MCF 10A (cell line): ENCODE measurements at regions of chr12 and their contacts with region 1.

Region 1: DNA sequence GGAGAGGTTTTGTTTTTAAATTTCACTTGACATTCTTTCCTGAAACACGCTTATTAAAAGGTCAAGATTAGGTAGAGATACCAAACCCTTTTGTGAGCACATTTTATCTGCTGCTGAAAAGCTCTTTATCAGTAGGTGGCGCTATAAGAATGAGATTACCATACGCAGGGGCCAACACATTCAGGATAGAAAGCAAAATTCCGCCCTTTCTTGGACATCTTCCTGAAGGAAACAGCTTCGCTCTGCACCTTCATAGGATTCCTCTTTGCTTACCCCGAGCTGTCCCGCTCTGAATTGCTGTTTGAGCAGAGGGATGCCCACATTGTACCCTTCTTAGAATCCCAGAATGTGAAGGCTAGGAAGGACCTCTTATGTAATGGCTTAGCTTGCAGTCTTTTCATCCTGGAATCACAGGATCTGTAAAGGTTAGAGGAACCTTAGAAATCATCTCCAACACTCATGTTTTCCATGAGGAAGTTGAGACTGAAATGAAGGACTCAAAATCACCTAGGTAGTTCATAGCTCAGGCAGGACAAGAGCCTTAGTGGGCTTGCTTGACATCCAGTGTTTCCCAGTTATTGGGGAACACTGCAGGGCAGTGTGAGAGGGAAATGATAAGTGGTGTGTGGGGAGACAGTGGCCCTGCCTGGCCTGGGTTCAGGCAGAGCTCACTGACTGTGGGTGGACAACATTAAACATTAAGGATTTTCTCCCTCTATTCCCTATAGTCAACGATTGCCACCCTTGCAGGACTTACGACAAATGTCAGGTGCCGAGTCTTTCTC is 38.7 kb upstream of the CRY1 start:
- DNase-seq: peak; percentile 72
- H3K4me3 Mint-ChIP-seq: no peak overlapping the region
- H3K27ac Mint-ChIP-seq: no peak overlapping the region
- H3K4me1 Mint-ChIP-seq: no peaks in the 10 kb centered on the region
- H3K27me3 Mint-ChIP-seq: no peaks in the 10 kb centered on the region
- CTCF ChIP-seq: peak; percentile 68

Region 2: DNA sequence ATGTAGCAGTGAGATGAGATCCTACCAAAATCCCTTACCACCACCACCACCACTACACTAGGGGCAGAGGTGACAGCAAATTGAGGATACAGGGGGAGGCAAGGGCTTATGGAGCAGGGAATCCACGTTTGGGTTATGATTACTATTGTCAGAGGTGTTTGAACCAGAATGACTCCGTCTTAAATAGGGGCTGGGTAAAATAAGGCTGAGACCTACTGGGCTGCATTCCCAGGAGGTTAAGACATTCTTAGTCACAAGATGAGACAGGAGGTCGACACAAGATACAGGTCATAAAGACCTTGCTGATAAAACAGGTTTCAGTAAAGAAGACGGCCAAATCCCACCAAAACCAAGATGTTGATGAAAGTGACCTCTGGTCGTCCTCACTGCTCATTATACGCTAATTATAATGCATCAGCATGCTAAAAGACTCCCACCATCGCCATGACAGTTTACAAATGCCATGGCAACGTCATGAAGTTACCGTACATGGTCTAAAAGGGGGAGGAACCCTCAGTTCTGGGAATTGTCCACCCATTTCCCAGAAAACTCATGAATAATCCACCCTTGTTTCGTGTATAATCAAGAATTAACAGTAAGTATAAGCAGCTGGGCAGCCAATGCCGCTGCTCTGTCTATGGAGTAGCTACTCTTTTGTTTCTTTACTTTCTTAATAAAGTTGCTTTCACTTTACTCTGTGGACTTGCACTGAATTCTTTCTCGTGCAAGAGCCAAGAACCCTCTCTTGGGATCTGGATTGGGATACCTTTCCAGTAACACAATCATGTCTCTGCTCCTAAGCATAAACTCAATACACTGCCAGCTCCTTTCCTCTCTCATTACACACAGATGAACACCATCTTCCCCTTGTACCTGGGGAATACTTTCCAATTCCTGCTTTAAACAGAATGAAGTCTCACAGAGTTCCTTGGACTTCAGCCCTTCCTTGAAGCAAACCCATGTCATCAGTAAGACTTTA is 22.0 kb before region 1 on chr12:
- CTCF ChIA-PET with region 1: interaction called, 59 read pairs
- POLR2A ChIA-PET with region 1: interaction called, 3 read pairs
- intact Hi-C with region 1: no loop called
- DNase-seq: no peak
- H3K4me3 Mint-ChIP-seq: no peak overlapping the region
- H3K27ac Mint-ChIP-seq: no peak overlapping the region
- H3K4me1 Mint-ChIP-seq: no peaks in the 10 kb centered on the region
- H3K27me3 Mint-ChIP-seq: peaks cover 39% of the 10 kb centered on the region
- CTCF ChIP-seq: no peak

Region 3: GRCh38 chr12:107304588-107305532 is 172.8 kb after region 1 on chr12:
- CTCF ChIA-PET with region 1: interaction called, 10 read pairs
- POLR2A ChIA-PET with region 1: no interaction called
- intact Hi-C with region 1: no loop called
- DNase-seq: no peak
- H3K4me3 Mint-ChIP-seq: no peak overlapping the region
- H3K27ac Mint-ChIP-seq: no peak overlapping the region
- H3K4me1 Mint-ChIP-seq: no peaks in the 10 kb centered on the region
- H3K27me3 Mint-ChIP-seq: peaks cover 20% of the 10 kb centered on the region
- CTCF ChIP-seq: no peak

Region 4: GRCh38 chr12:107393043-107393717 is 261.2 kb after region 1 on chr12:
- CTCF ChIA-PET with region 1: interaction called, 150 read pairs
- POLR2A ChIA-PET with region 1: interaction called, 5 read pairs
- intact Hi-C with region 1: no loop called
- DNase-seq: no peak
- H3K4me3 Mint-ChIP-seq: no peak overlapping the region
- H3K27ac Mint-ChIP-seq: no peak overlapping the region
- H3K4me1 Mint-ChIP-seq: no peaks in the 10 kb centered on the region
- H3K27me3 Mint-ChIP-seq: no peaks in the 10 kb centered on the region
- CTCF ChIP-seq: no peak

Region 5: DNA sequence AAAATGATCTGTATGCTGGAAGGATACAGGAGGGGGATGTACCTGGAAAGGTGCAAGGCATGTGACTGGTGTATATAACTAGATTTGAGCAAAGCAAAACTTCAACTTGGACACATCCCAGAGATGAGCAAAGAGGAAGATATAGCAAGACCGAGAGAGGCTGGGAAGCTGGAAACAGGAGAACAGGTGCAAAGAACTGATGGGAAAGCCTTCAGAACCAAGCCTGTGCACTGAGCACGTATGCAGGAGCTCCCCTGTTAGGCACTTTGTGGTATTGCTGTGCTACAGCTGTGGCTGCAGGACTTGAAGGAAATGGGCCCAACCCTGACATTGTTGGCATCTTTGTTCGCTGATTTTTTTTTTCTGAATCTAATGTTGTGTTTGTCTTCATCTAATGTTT is 432.9 kb after region 1 on chr12:
- CTCF ChIA-PET with region 1: interaction called, 7 read pairs
- POLR2A ChIA-PET with region 1: no interaction called
- intact Hi-C with region 1: loop called (anchors 1 kb)
- DNase-seq: peak; percentile 43
- H3K4me3 Mint-ChIP-seq: no peak overlapping the region
- H3K27ac Mint-ChIP-seq: no peak overlapping the region
- H3K4me1 Mint-ChIP-seq: peaks cover 8% of the 10 kb centered on the region
- H3K27me3 Mint-ChIP-seq: no peaks in the 10 kb centered on the region
- CTCF ChIP-seq: peak; percentile 38

Region 6: GRCh38 chr12:107607464-107608392 is 475.7 kb after region 1 on chr12:
- CTCF ChIA-PET with region 1: interaction called, 516 read pairs
- POLR2A ChIA-PET with region 1: interaction called, 5 read pairs
- intact Hi-C with region 1: loop called (anchors 1 kb)
- DNase-seq: peak; percentile 77
- H3K4me3 Mint-ChIP-seq: no peak overlapping the region
- H3K27ac Mint-ChIP-seq: no peak overlapping the region
- H3K4me1 Mint-ChIP-seq: no peaks in the 10 kb centered on the region
- H3K27me3 Mint-ChIP-seq: no peaks in the 10 kb centered on the region
- CTCF ChIP-seq: peak; percentile 89